PC-9 (cell line): ENCODE measurements at regions of chr2 and their contacts with region 1.

Region 1: GRCh38 chr2:6429208-6429986 is 436.3 kb downstream of the CMPK2 start:
- DNase-seq: no peak
- H3K4me3 ChIP-seq: no peak overlapping the region
- H3K27ac ChIP-seq: no peak overlapping the region
- H3K4me1 ChIP-seq: no peaks in the 10 kb centered on the region
- H3K27me3 ChIP-seq: peaks cover 11% of the 10 kb centered on the region
- CTCF ChIP-seq: no peak

Region 2: GRCh38 chr2:6381326-6381725 is 48.1 kb before region 1 on chr2:
- CTCF ChIA-PET with region 1: no interaction called
- POLR2A ChIA-PET with region 1: interaction called, 27 read pairs
- intact Hi-C with region 1: no loop called
- DNase-seq: no peak
- H3K4me3 ChIP-seq: no peak overlapping the region
- H3K27ac ChIP-seq: no peak overlapping the region
- H3K4me1 ChIP-seq: no peaks in the 10 kb centered on the region
- H3K27me3 ChIP-seq: no peaks in the 10 kb centered on the region
- CTCF ChIP-seq: no peak

Region 3: DNA sequence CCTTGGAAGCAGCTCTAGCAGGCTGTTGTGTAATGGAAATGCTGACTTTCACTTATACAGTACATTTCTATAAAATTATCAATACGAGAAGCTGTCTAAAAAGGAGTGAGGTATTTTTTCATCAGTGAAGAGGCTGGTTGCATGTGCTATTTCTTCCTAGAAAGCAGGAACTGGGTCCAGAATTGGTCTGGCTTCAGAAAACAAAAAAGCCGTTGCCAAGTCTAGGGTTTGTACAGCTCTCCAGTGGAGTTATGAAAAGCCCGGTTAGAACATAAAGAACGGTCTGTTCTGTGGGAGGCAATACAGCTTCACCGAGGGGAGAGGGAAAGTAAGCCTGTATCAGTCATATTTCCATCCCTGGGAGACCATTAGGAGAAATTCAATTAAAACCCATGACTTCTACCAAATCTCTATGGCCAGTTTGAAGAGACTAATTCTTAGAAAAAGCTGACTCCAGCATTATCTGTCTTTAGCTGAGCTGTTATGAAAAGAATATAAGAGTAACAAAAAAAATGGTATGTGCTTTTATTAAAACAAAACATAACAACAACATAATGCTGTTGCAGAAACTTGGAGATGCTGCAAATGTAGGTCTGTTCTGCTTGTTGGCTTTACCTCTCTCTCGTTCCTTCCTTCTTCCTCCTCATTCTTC is 219.3 kb after region 1 on chr2:
- CTCF ChIA-PET with region 1: no interaction called
- POLR2A ChIA-PET with region 1: no interaction called
- intact Hi-C with region 1: no loop called
- DNase-seq: no peak
- H3K4me3 ChIP-seq: no peak overlapping the region
- H3K27ac ChIP-seq: no peak overlapping the region
- H3K4me1 ChIP-seq: no peaks in the 10 kb centered on the region
- H3K27me3 ChIP-seq: peaks cover 23% of the 10 kb centered on the region; the same call in 1 of the 2 replicates
- CTCF ChIP-seq: no peak